ENCODE measurements at regions of chr12 and their contacts with region 1.

Region 1: GRCh38 chr12:93569656-93570551 is 2.6 kb upstream of the SOCS2 start:
- DNase-seq: peak; percentile 85 to 98 (median 90)
- ATAC-seq: peak; percentile 80
- H3K4me3 ChIP-seq: peak overlapping the region; percentile 93
- H3K27ac ChIP-seq: peak overlapping the region; percentile 96
- H3K4me1 ChIP-seq: peaks cover 11 to 47% of the 10 kb centered on the region in 2 experiments; a peak in 4 of 5 replicates
- H3K27me3 ChIP-seq: no peaks in the 10 kb centered on the region
- CTCF ChIP-seq: peak; percentile 74 to 84 (median 83)
- EP300 ChIP-seq: peak; percentile 84
- POLR2A ChIP-seq: no peak
- RAD21 ChIP-seq: peak; percentile 76 to 86

Region 2: GRCh38 chr12:92995258-92995903 is 574.5 kb before region 1 on chr12:
- CTCF ChIA-PET with region 1: no interaction called
- POLR2A ChIA-PET with region 1: no interaction called
- in situ Hi-C with region 1: no loop called
- intact Hi-C with region 1: loop called (anchors 10 kb)
- DNase-seq: no peak
- ATAC-seq: no peak
- H3K4me3 ChIP-seq: no peak overlapping the region
- H3K27ac ChIP-seq: no peak overlapping the region
- H3K4me1 ChIP-seq: peaks cover 0 to under 1% of the 10 kb centered on the region in 2 experiments; a peak in 1 of 5 replicates
- H3K27me3 ChIP-seq: no peaks in the 10 kb centered on the region
- CTCF ChIP-seq: no peak
- EP300 ChIP-seq: no peak
- POLR2A ChIP-seq: no peak
- RAD21 ChIP-seq: no peak

Region 3: GRCh38 chr12:93449277-93449676 is 120.6 kb before region 1 on chr12:
- CTCF ChIA-PET with region 1: no interaction called
- POLR2A ChIA-PET with region 1: no interaction called
- in situ Hi-C with region 1: no loop called
- intact Hi-C with region 1: no loop called
- DNase-seq: no peak
- ATAC-seq: no peak
- H3K4me3 ChIP-seq: no peak overlapping the region
- H3K27ac ChIP-seq: no peak overlapping the region
- H3K4me1 ChIP-seq: no peaks in the 10 kb centered on the region
- H3K27me3 ChIP-seq: no peaks in the 10 kb centered on the region
- CTCF ChIP-seq: no peak
- EP300 ChIP-seq: no peak
- POLR2A ChIP-seq: no peak
- RAD21 ChIP-seq: no peak

Region 4: DNA sequence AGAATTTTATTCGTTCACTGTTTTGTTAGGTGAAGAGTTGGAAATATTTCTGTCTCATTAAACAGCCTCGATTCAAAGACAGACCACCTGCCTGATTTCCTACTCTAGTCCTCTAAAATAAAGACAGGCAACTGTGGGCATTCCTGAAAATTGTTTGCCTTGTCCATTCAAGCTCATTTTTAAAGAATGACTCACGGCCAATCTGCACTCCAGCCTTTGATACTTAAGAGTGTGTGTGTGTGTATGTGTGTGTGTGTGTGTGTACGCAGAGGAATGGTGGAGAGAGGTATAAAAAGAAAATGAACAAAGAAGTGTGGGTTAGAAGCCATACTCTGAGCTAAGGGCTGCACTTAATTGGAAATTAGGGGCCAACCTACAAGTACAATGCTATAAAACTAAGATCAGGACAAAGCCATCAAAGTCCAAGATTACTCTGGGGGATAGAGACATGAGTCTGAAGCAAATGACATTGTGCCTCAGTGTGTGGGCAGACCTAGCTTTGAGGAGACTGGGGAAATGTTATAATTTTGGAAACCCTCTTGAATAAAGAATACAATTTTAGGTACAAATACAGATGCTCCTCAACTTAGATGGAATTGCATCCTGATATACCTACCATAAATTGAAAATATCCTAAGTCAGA is 43.0 kb before region 1 on chr12:
- CTCF ChIA-PET with region 1: no interaction called
- POLR2A ChIA-PET with region 1: interaction called, 3 read pairs
- in situ Hi-C with region 1: no loop called
- intact Hi-C with region 1: loop called (anchors 5 kb)
- DNase-seq: peak in 1 of 4 experiments; percentile 23
- ATAC-seq: no peak
- H3K4me3 ChIP-seq: no peak overlapping the region
- H3K27ac ChIP-seq: no peak overlapping the region
- H3K4me1 ChIP-seq: peaks cover 0 to 6% of the 10 kb centered on the region in 2 experiments; a peak in 2 of 5 replicates
- H3K27me3 ChIP-seq: no peaks in the 10 kb centered on the region
- CTCF ChIP-seq: no peak
- EP300 ChIP-seq: no peak
- POLR2A ChIP-seq: no peak
- RAD21 ChIP-seq: no peak

Region 5: DNA sequence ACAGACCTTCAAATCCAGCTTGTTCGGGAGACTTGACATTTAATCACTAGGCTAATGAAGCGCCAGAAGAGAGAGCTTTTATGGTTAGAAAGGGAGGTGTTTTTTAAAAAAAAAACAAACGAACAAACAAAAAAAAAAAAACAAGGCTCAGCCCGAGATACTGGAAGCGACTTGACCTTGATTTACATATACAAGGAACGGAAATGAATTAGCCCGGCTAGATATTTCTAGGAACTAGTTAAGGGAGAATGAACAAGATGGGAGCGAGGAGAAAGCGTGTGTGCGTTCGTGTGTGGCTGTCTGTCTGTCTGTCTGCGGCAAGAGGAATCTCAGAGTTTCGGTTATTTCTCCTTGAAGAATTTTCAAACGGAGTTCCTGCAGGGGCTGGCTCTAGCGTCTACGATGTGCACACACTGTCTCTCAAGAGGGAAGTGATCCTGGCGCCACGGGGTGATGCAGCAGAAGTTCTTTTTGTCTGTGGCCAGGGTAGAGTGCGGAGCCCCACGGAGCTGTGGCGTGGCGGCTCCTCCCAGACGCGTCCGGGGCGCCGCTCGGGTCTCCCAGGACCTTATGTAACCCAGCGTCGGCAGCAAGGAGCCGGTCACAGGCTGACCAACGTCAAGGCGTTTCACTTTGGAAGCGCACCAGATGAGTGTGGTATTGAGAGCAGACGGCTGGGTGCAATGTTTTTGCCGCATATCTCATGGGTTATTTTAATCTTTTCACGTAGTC is 21.4 kb after region 1 on chr12:
- CTCF ChIA-PET with region 1: no interaction called
- POLR2A ChIA-PET with region 1: interaction called, 15 read pairs
- in situ Hi-C with region 1: no loop called
- intact Hi-C with region 1: no loop called
- DNase-seq: peak; percentile 54 to 85 (median 68)
- ATAC-seq: peak; percentile 84
- H3K4me3 ChIP-seq: peak overlapping the region; percentile 49
- H3K27ac ChIP-seq: peak overlapping the region; percentile 85
- H3K4me1 ChIP-seq: peaks cover 4 to 14% of the 10 kb centered on the region in 2 experiments
- H3K27me3 ChIP-seq: no peaks in the 10 kb centered on the region
- CTCF ChIP-seq: no peak
- EP300 ChIP-seq: peak; percentile 53
- POLR2A ChIP-seq: peak; percentile 88
- RAD21 ChIP-seq: peak in 1 of 2 experiments; percentile 28; a peak in 1 of 4 replicates

Region 6: GRCh38 chr12:93742110-93742934 is 172.4 kb after region 1 on chr12:
- CTCF ChIA-PET with region 1: interaction called, 24 read pairs
- POLR2A ChIA-PET with region 1: interaction called, 8 read pairs
- in situ Hi-C with region 1: loop called (anchors 5 kb)
- intact Hi-C with region 1: loop called (anchors 1 kb)
- DNase-seq: peak; percentile 86 to 96 (median 90)
- ATAC-seq: peak; percentile 88
- H3K4me3 ChIP-seq: peak overlapping the region; percentile 44
- H3K27ac ChIP-seq: peak overlapping the region; percentile 91
- H3K4me1 ChIP-seq: peaks cover 11 to 56% of the 10 kb centered on the region in 2 experiments
- H3K27me3 ChIP-seq: no peaks in the 10 kb centered on the region
- CTCF ChIP-seq: peak; percentile 55 to 82 (median 65); a peak in 5 of 6 replicates
- EP300 ChIP-seq: peak; percentile 95
- POLR2A ChIP-seq: peak; percentile 29; the same call in 1 of the 2 replicates
- RAD21 ChIP-seq: peak; percentile 51 to 88

Region 7: GRCh38 chr12:93979189-93979588 is 409.3 kb after region 1 on chr12:
- CTCF ChIA-PET with region 1: no interaction called
- POLR2A ChIA-PET with region 1: no interaction called
- in situ Hi-C with region 1: no loop called
- intact Hi-C with region 1: loop called (anchors 5 kb)
- DNase-seq: peak in 1 of 4 experiments; percentile 50
- ATAC-seq: peak; percentile 56
- H3K4me3 ChIP-seq: no peak overlapping the region
- H3K27ac ChIP-seq: no peak overlapping the region
- H3K4me1 ChIP-seq: peaks cover 0 to 12% of the 10 kb centered on the region in 2 experiments; a peak in 3 of 5 replicates
- H3K27me3 ChIP-seq: no peaks in the 10 kb centered on the region
- CTCF ChIP-seq: peak; percentile 42 to 73 (median 55); a peak in 4 of 6 replicates
- EP300 ChIP-seq: no peak
- POLR2A ChIP-seq: no peak
- RAD21 ChIP-seq: peak; percentile 79 to 94